ENCODE measurements at regions of chr16 and their contacts with region 1.

Region 1: DNA sequence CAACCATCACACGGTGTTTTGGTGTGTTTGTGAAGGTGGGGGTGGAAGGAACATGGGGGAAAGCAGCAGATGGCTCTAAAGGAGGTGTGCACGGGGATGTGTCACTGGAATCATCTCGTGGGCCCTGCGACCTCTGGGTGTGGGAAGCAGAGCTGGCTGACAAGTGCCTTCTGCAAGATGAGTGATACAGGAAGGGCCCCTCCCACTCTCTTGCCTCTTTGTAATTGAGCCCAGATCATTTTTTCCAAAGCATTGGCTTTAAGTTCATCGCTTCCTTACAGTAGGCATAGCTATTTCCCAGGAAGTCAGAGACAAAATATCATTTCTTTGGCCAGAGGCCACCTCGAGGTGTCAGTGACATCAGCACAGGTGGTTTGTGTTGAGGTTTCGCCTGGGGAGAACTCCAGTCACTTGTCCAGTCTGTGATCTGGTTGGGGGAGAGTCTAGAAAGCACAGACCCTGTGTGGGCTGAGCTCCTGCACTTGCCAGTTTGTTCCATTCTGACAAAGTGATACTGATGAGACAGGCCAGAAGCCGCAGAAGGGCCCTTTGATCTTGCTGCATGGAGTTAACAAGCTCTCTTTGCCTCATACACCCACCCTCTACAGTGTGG is 20.6 kb upstream of the SNTB2 start:
- DNase-seq: peak; percentile 95
- ATAC-seq: peak; percentile 93
- H3K4me3 Mint-ChIP-seq: peak overlapping the region; percentile 7
- H3K27ac Mint-ChIP-seq: peak overlapping the region; percentile 85
- H3K4me1 Mint-ChIP-seq: peaks cover 49% of the 10 kb centered on the region
- H3K27me3 Mint-ChIP-seq: no peaks in the 10 kb centered on the region
- CTCF ChIP-seq: no peak

Region 2: GRCh38 chr16:69150146-69150865 is 16.0 kb before region 1 on chr16:
- CTCF ChIA-PET with region 1: interaction called, 22 read pairs
- POLR2A ChIA-PET with region 1: interaction called, 6 read pairs
- intact Hi-C with region 1: no loop called
- DNase-seq: peak; percentile 66
- ATAC-seq: peak; percentile 79
- H3K4me3 Mint-ChIP-seq: no peak overlapping the region
- H3K27ac Mint-ChIP-seq: no peak overlapping the region
- H3K4me1 Mint-ChIP-seq: peaks cover under 1% of the 10 kb centered on the region
- H3K27me3 Mint-ChIP-seq: no peaks in the 10 kb centered on the region
- CTCF ChIP-seq: peak; percentile 80

Region 3: DNA sequence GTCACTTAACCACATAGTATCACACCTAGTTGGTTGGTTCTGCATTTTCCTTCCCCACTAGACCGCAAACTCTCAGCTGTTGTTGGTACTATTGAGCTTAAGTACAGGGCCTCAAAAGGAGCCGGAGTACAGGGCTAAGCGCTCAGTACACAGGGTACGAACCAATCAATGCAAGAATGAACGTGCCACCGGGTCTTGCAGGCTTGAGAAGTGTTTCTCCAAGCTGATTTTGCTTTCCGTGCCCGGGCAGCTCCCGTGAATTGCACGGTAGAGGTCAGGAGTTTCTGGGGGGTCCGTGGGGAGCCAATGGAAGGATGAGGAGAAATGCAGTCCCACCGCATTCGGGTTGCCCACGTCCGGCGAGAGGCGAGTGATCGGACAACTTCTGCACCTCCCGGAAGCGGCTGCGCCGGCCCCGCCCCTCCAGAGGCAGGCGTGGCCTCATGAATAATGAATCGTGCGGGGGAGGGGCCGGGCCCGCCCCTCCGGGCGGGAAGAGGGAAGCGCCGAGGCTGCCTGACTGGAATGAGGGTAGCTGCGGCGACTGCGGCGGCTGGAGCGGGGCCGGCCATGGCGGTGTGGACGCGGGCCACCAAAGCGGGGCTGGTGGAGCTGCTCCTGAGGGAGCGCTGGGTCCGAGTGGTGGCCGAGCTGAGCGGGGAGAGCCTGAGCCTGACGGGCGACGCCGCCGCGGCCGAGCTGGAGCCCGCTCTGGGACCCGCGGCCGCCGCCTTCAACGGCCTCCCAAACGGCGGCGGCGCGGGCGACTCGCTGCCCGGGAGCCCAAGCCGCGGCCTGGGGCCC is 20.5 kb after region 1 on chr16 and contains the start of gene SNTB2:
- CTCF ChIA-PET with region 1: interaction called, 9 read pairs
- POLR2A ChIA-PET with region 1: interaction called, 23 read pairs
- intact Hi-C with region 1: loop called (anchors 1 kb)
- DNase-seq: peak; percentile 87
- ATAC-seq: peak; percentile 84
- H3K4me3 Mint-ChIP-seq: peak within 1 kb of the TSS; percentile 97
- H3K27ac Mint-ChIP-seq: peak within 1 kb of the TSS; percentile 99
- H3K4me1 Mint-ChIP-seq: peaks cover 51% of the 10 kb centered on the region
- H3K27me3 Mint-ChIP-seq: no peaks in the 10 kb centered on the region
- CTCF ChIP-seq: no peak
- total RNA-seq, gene SNTB2: 11.8 to 13.0 TPM

Measured in activated CD8-positive, alpha-beta T cell treated with anti-CD3 and anti-CD28 coated beads for 36 hours (primary cell).